ENCODE measurements at regions of chr11 and their contacts with region 1.

Region 1: DNA sequence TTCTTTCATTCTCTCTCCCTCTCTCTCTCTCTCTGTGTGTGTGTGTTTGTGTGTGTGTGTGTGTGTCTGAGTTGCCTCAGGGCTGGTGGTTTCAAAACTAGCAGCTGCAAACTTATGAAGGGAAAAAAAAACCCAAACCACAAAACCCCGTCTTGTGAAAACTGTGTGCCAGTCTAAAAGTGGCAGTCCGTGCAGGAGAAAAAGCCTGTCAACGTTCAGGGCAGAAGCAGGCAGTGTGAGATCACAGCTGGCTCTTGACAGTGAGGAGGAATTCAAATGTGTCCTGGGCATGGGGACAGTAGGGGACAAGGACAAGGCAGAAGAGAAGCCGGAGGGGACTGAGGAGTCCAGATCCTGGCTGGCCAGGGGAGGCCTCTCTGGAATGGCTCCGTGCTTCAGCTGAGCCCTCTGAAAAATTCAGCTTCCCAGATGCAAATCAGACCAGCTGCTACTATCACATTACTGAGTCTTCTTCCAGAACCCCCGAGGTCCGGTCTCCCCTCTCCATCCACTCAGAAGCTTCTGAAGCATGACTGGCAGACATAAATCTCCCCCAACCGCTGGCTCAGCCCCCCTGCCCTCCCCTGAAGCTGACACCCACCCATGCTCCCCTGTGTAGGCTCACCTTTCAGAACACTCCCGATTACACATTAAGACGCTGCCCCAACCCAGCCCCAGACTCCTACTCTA is 31.9 kb downstream of the FLI1 start:
- DNase-seq: peak; percentile 19 to 95 (median 67)
- ATAC-seq: peak; percentile 56
- H3K4me3 ChIP-seq: peak overlapping the region; percentile 16 to 25
- H3K4me3 Mint-ChIP-seq: peak overlapping the region; percentile 87
- H3K27ac ChIP-seq: peak overlapping the region; percentile 6 to 69
- H3K27ac Mint-ChIP-seq: peak overlapping the region; percentile 89
- H3K4me1 ChIP-seq: peaks cover 99% of the 10 kb centered on the region
- H3K4me1 Mint-ChIP-seq: peaks cover 98% of the 10 kb centered on the region
- H3K27me3 ChIP-seq: no peaks in the 10 kb centered on the region
- H3K27me3 Mint-ChIP-seq: no peaks in the 10 kb centered on the region
- CTCF ChIP-seq: no peak

Region 2: GRCh38 chr11:128738942-128739341 is 13.2 kb after region 1 on chr11:
- CTCF ChIA-PET with region 1: interaction called, 7 read pairs
- POLR2A ChIA-PET with region 1: interaction called, 50 read pairs
- intact Hi-C with region 1: loop called in 1 of 2 experiments (anchors 1 kb)
- DNase-seq: peak in 4 of 9 experiments; percentile 27 to 64 (median 42)
- ATAC-seq: peak; percentile 47
- H3K4me3 ChIP-seq: peak overlapping the region in 1 of 2 experiments; percentile 10
- H3K4me3 Mint-ChIP-seq: peak overlapping the region; percentile 67
- H3K27ac ChIP-seq: peak overlapping the region in 1 of 2 experiments; percentile 52
- H3K27ac Mint-ChIP-seq: peak overlapping the region; percentile 94
- H3K4me1 ChIP-seq: peaks cover 81% of the 10 kb centered on the region
- H3K4me1 Mint-ChIP-seq: peaks cover 88% of the 10 kb centered on the region
- H3K27me3 ChIP-seq: no peaks in the 10 kb centered on the region
- H3K27me3 Mint-ChIP-seq: no peaks in the 10 kb centered on the region
- CTCF ChIP-seq: no peak

Measured in CD8-positive, alpha-beta T cell (primary cell).